ENCODE measurements at regions of chr5 and their contacts with region 1.

Region 1: GRCh38 chr5:91074615-91075014 is 308.5 kb downstream of the ARRDC3 start:
- DNase-seq: peak; percentile 38
- H3K4me3 Mint-ChIP-seq: no peak overlapping the region
- H3K27ac Mint-ChIP-seq: peak overlapping the region; percentile 58
- H3K4me1 Mint-ChIP-seq: peaks cover 35% of the 10 kb centered on the region
- H3K27me3 Mint-ChIP-seq: no peaks in the 10 kb centered on the region
- CTCF ChIP-seq: peak; percentile 33

Region 2: GRCh38 chr5:90940227-90940995 is 134.2 kb before region 1 on chr5:
- CTCF ChIA-PET with region 1: no interaction called
- intact Hi-C with region 1: loop called (anchors 5 kb)
- DNase-seq: peak; percentile 42
- H3K4me3 Mint-ChIP-seq: no peak overlapping the region
- H3K27ac Mint-ChIP-seq: peak overlapping the region; percentile 7
- H3K4me1 Mint-ChIP-seq: peaks cover 28% of the 10 kb centered on the region
- H3K27me3 Mint-ChIP-seq: no peaks in the 10 kb centered on the region
- CTCF ChIP-seq: no peak

Region 3: DNA sequence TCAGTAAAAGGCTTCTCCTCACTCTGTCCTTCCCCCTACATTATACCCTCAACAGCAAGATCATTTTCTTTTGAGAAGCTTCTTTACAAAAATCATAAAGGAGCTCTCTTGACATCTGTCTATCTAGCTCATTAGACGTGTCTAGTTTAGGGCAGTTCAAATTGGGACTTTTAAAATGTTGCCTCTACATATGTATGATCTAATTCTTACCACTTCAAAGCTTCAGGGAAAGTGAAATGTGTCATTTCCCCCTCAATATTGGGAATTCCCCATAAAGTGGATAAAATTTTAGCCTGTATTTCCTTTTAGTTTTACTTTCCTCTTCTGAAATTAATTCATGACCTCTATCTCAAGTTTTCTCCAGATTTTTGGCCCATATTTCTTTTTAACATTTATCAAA is 15.2 kb before region 1 on chr5:
- CTCF ChIA-PET with region 1: interaction called, 10 read pairs
- intact Hi-C with region 1: no loop called
- DNase-seq: no peak
- H3K4me3 Mint-ChIP-seq: peak overlapping the region; percentile 38
- H3K27ac Mint-ChIP-seq: peak overlapping the region; percentile 93
- H3K4me1 Mint-ChIP-seq: peaks cover 41% of the 10 kb centered on the region
- H3K27me3 Mint-ChIP-seq: no peaks in the 10 kb centered on the region
- CTCF ChIP-seq: no peak